ENCODE measurements at regions of chr2 and their contacts with region 1.

Region 1: GRCh38 chr2:20254731-20255130 is 29.8 kb upstream of the SDC1 start:
- DNase-seq: no peak
- ATAC-seq: no peak
- H3K4me3 ChIP-seq: no peak overlapping the region
- H3K27ac ChIP-seq: no peak overlapping the region
- H3K4me1 ChIP-seq: no peaks in the 10 kb centered on the region
- H3K27me3 ChIP-seq: no peaks in the 10 kb centered on the region
- CTCF ChIP-seq: no peak
- POLR2A ChIP-seq: no peak

Region 2: DNA sequence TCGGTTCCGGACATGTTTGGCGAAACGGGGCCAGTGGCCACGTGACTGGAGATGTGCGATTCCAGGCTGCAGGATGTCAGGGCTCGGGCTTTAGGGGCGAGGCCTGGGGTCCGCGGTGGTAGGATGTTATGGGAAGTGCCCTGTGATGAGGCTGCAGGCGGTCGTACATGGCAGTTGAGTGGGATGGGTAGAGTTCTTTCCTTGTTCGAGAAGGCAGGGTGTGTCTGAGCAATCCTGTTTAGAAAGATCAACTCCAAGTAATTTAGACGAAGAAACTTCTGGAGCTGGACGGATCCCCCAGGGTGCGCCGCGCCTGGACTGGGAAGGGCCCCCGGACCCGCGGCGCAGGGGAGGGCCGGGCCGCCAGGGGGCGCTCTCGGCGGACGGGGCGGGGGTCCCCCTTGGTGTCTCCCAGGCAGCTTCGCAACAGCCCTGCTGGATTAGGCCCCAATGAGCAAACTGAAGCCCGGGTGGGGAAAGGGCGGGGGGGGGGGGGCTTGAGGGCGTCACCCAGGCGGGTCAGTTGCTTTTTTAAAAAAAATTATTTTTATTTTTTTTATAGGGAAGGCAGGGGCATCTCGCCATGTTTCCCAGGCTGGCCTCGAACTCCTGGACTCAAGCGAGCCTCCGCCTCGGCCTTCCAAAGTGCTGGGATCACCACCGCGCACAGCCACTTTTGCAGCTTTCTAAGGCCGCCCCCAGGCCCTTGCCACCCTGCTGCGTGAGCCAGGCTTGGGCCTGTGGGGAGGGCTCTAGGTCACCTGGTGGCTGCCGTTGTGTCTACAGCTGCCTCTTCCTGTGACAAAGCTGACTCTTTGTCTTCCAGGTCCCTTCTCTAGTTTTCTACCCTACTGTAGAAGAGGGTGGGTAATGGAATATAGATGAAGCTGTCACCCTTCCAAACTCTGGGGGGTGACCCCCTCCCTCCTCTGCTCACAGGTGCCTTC is 12.4 kb before region 1 on chr2:
- in situ Hi-C with region 1: no loop called
- intact Hi-C with region 1: no loop called
- DNase-seq: no peak
- ATAC-seq: peak in 1 of 2 donors; percentile 24
- H3K4me3 ChIP-seq: no peak overlapping the region
- H3K27ac ChIP-seq: no peak overlapping the region
- H3K4me1 ChIP-seq: no peaks in the 10 kb centered on the region
- H3K27me3 ChIP-seq: peaks cover 0 to 4% (median 0%) of the 10 kb centered on the region in 3 donors
- CTCF ChIP-seq: peak in 4 of 5 experiments; percentile 29 to 49 (median 38)
- POLR2A ChIP-seq: no peak

Region 3: GRCh38 chr2:20288642-20289340 is 34.1 kb after region 1 on chr2:
- in situ Hi-C with region 1: no loop called
- intact Hi-C with region 1: loop called (anchors 5 kb)
- DNase-seq: no peak
- ATAC-seq: no peak
- H3K4me3 ChIP-seq: no peak overlapping the region
- H3K27ac ChIP-seq: no peak overlapping the region
- H3K4me1 ChIP-seq: no peaks in the 10 kb centered on the region
- H3K27me3 ChIP-seq: no peaks in the 10 kb centered on the region
- CTCF ChIP-seq: no peak
- POLR2A ChIP-seq: no peak